Ascending aorta (tissue), 2 donors: ENCODE measurements at regions of chr14 and their contacts with region 1.

Region 1: GRCh38 chr14:54805521-54806322 is 96.9 kb downstream of the GCH1 start:
- DNase-seq: peak in 1 of 2 donors; percentile 93
- H3K4me3 ChIP-seq: peak overlapping the region; percentile 27 to 42
- H3K27ac ChIP-seq: no peak overlapping the region
- H3K4me1 ChIP-seq: peaks cover 3 to 7% of the 10 kb centered on the region in 2 donors
- H3K27me3 ChIP-seq: no peaks in the 10 kb centered on the region
- CTCF ChIP-seq: peak; percentile 85 to 95 (median 92)

Region 2: DNA sequence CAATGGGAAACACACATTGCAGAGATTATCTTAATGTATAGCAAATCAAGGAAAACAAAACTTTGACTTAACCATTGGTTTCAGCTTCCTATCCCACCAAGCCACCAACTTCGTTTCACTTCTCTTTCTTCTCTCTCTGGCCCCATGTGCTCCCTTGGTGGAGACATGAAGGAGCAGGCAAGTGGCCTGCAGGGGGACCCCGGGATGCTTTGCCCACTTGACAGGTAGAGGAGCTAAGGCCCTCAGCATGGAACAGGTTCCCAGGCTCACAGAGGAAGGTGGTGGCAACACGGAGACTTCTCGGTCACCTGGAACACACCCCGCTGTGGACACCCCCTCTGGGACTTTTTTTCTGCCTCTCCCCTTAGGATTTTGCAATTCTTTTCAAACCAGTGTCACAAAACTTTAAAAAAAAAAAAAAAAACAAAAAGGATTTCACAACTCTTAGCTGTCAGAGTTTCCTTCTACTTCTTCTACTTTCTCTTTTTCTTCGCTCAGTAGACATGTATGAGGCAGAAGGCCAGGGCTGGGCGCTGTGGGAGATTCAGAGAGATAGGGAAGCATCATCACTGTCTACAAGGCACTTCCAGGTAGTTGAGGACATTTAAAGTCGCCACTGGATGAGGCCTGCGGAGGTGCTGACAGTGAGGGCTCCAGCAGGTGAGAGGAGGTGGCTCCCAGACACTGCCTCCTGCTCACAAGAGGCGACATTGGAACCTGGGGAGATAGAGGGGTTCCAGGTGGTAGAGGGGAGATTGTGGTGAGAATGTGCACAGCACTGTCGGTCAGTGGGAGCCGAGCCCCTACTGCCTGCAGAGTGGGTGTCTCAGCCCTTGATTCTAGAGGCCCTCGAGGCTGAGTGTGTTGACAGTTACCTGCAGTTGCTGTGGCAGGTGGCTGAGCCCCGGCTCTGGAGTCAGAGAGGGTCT is 22.7 kb before region 1 on chr14:
- intact Hi-C with region 1: loop called (anchors 2 kb)
- DNase-seq: peak in 1 of 2 donors; percentile 73
- H3K4me3 ChIP-seq: no peak overlapping the region
- H3K27ac ChIP-seq: peak overlapping the region; percentile 78 to 91
- H3K4me1 ChIP-seq: peaks cover 11 to 21% of the 10 kb centered on the region in 2 donors
- H3K27me3 ChIP-seq: no peaks in the 10 kb centered on the region
- CTCF ChIP-seq: no peak